Body of pancreas (tissue), 4 donors: ENCODE measurements at regions of chr1 and their contacts with region 1.

Region 1: GRCh38 chr1:33460947-33461629 is 11.4 kb upstream of the ZSCAN20 start:
- DNase-seq: peak in 1 of 4 donors; percentile 53
- ATAC-seq: no peak
- H3K4me3 ChIP-seq: no peak overlapping the region
- H3K27ac ChIP-seq: peak overlapping the region in 1 of 4 donors; percentile 34
- H3K4me1 ChIP-seq: no peaks in the 10 kb centered on the region
- H3K27me3 ChIP-seq: no peaks in the 10 kb centered on the region
- CTCF ChIP-seq: no peak
- POLR2A ChIP-seq: no peak

Region 2: DNA sequence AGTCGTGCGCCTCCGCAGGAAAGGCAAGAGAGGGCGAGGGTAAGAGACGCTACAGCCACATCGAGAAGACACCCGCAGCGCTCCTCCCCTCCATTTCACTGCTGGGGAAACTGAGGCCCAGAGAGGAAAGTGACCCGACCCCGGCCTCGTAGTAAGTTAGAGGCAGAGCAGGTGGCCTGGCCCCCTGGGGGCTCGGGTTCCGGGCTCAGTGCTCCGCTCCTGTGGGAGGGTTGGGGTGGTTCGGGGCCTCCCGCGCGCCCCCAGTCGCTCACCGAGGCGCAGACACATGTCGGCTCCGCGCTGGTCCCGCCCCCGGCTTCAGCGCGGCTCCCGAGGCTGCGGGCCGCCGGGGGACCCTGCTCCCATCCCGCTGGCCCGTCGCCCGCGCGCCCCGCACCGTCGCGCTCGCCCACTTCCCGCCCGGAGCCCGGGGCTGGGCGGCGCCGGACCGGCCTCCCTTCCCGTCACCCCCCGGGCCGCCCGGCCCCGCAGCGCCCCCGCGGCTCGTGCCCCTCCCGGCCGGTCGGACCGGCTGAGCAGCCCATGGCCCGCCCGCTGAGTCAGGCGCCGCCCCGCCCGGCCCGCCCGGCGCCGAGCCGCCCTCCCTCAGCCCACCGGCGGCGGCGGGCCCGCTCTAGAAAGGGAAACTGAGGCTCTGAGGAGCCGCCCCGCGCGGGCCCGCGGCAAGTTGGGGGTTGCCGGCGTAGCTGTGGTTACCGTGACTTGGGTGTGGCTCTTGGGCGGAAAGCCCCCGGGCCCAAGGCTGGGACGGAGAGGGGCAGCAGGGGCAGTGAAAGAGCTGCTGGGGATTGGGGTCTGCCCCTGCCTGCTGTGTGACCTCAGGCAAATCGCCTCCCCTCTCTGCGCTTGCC is 559.9 kb before region 1 on chr1 and contains the start of gene TMEM54:
- intact Hi-C with region 1: no loop called
- DNase-seq: peak; percentile 73 to 84 (median 78)
- ATAC-seq: peak; percentile 87
- H3K4me3 ChIP-seq: peak within 1 kb of the TSS; percentile 47 to 48
- H3K27ac ChIP-seq: peak within 1 kb of the TSS in 3 of 4 donors; percentile 44 to 77 (median 56)
- H3K4me1 ChIP-seq: peaks cover 33% of the 10 kb centered on the region
- H3K27me3 ChIP-seq: no peaks in the 10 kb centered on the region
- CTCF ChIP-seq: peak in 2 of 7 experiments; percentile 10 to 22
- POLR2A ChIP-seq: peak in 1 of 3 donors; percentile 25
- total RNA-seq, gene TMEM54: 40.2 to 41.2 TPM

Region 3: DNA sequence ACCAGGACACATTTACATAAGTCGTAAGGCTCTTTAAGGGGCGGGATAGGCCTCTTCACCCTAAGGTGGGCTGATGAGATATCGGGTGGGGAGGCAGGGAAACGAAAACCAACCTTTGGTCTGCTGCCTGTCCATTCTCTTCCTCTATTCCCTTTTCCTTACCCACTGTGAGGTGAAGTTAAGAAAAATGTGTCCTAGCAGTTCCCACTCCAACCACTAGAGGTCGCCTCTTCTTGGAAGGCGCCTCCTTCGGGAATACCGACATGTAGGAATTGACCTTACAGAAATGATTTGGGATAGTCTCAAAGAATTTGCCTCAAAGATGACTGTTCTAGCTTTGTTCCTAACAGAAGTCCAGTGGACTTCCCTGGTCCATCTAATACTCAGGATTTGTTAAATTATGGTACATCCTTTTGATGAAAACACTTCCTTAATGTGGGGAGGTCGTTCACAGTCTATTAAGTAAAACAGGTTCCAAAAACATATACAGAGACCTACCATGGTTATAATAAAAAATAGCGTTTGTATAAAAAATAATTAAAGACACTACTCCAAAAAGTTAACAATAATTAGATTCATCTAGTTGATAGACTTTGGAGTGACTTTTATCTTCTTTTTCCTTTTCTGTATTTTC is 366.0 kb before region 1 on chr1:
- intact Hi-C with region 1: loop called (anchors 10 kb)
- DNase-seq: peak; percentile 50 to 75 (median 66)
- ATAC-seq: peak; percentile 69
- H3K4me3 ChIP-seq: no peak overlapping the region
- H3K27ac ChIP-seq: no peak overlapping the region
- H3K4me1 ChIP-seq: no peaks in the 10 kb centered on the region
- H3K27me3 ChIP-seq: no peaks in the 10 kb centered on the region
- CTCF ChIP-seq: peak; percentile 83 to 99 (median 90)
- POLR2A ChIP-seq: no peak

Region 4: GRCh38 chr1:33295450-33296081 is 165.5 kb before region 1 on chr1:
- intact Hi-C with region 1: loop called (anchors 10 kb)
- DNase-seq: peak; percentile 87 to 93 (median 90)
- ATAC-seq: peak; percentile 86
- H3K4me3 ChIP-seq: no peak overlapping the region
- H3K27ac ChIP-seq: no peak overlapping the region
- H3K4me1 ChIP-seq: no peaks in the 10 kb centered on the region
- H3K27me3 ChIP-seq: no peaks in the 10 kb centered on the region
- CTCF ChIP-seq: peak; percentile 93 to 98 (median 96)
- POLR2A ChIP-seq: no peak

Region 5: DNA sequence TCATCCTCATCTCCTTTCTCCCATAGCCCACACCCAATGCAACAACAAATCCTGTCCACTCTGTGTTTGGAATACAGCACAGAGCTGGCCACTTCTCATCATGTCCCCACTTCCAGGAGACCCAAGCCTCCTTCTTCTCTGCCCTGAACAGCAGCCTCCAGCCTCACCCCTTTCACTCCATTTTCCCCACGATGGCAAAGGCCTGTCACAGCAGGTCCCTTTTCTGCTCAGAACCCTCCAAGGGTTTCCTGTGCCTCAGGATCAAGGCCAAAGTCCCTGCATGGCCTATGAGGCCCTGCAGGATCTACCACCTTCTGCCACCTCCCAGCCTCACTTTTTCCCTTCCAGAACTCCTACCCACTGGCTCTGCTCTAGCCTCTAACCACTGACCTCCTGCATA is 625.5 kb after region 1 on chr1:
- intact Hi-C with region 1: no loop called
- DNase-seq: no peak
- ATAC-seq: no peak
- H3K4me3 ChIP-seq: no peak overlapping the region
- H3K27ac ChIP-seq: no peak overlapping the region
- H3K4me1 ChIP-seq: no peaks in the 10 kb centered on the region
- H3K27me3 ChIP-seq: no peaks in the 10 kb centered on the region
- CTCF ChIP-seq: no peak
- POLR2A ChIP-seq: no peak